ENCODE measurements at regions of chr15 and their contacts with region 1.

Region 1: GRCh38 chr15:30991255-30992072 is at the start of gene MTMR10:
- DNase-seq: peak; percentile 48
- ATAC-seq: peak; percentile 90
- H3K4me3 ChIP-seq: peak within 1 kb of the TSS; percentile 93 to 98 (median 97)
- H3K27ac ChIP-seq: peak within 1 kb of the TSS; percentile 89
- H3K4me1 ChIP-seq: peaks cover 41% of the 10 kb centered on the region
- H3K27me3 ChIP-seq: no peaks in the 10 kb centered on the region; a peak in 1 of 5 replicates
- CTCF ChIP-seq: no peak
- EP300 ChIP-seq: 0 out of 4 replicates have a peak, but pooled peaks of 1 of the 2 experiments have one; percentile 6
- POLR2A ChIP-seq: peak; percentile 86 to 87
- RAD21 ChIP-seq: peak; percentile 28; the same call in 1 of the 2 replicates
- total RNA-seq, gene MTMR10: 17.4 and 18.6 TPM in 2 replicates

Region 2: DNA sequence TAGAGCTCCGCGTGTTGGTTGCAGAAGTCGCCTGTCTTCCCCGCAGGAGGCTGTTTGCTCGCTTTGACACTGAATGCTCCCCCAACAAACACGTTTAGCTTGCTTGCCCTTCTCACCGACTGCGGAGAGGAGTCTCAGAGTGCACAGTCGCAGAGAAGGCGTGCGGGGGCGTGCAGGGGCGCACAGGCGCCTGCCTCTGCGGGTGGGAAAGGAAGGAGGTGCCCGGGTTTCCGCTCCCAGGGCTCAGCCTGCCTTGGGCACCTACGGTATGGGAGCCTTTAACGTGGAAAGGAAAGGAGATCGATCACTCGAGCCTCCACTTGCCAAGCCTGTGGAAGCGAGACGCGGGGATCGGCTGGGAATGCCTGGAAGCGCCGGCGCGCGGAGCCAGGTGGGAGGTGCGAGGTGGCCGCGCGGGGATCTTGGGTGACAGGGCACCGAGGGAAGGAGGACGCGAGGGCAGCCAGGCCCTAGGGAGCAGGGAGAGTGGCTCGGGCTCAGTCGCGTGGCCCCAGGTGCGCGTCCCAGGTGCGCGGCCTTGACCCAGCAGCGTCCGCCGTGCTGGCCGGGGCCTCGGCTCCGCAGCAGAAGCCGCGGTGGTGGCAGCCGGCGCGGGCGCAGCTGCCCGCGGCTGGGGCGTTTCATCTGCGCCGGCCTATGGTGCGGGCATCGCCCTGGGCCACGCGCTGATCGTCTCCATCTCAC is 87.8 kb before region 1 on chr15 and contains the start of gene FAN1:
- CTCF ChIA-PET with region 1: no interaction called
- POLR2A ChIA-PET with region 1: interaction called, 8 read pairs
- in situ Hi-C with region 1: no loop called
- intact Hi-C with region 1: loop called (anchors 10 kb)
- DNase-seq: peak; percentile 78
- ATAC-seq: peak; percentile 96
- H3K4me3 ChIP-seq: peak within 1 kb of the TSS; percentile 77 to 88 (median 77)
- H3K27ac ChIP-seq: peak within 1 kb of the TSS; percentile 74
- H3K4me1 ChIP-seq: peaks cover 41% of the 10 kb centered on the region
- H3K27me3 ChIP-seq: no peaks in the 10 kb centered on the region
- CTCF ChIP-seq: peak; percentile 47
- EP300 ChIP-seq: no peak
- POLR2A ChIP-seq: peak; percentile 73 to 91; a peak in 3 of 4 replicates
- RAD21 ChIP-seq: 0 out of 2 replicates have a peak, but pooled peaks have one; percentile 35
- total RNA-seq, gene FAN1: 20.1 TPM in 2 replicates

Region 3: DNA sequence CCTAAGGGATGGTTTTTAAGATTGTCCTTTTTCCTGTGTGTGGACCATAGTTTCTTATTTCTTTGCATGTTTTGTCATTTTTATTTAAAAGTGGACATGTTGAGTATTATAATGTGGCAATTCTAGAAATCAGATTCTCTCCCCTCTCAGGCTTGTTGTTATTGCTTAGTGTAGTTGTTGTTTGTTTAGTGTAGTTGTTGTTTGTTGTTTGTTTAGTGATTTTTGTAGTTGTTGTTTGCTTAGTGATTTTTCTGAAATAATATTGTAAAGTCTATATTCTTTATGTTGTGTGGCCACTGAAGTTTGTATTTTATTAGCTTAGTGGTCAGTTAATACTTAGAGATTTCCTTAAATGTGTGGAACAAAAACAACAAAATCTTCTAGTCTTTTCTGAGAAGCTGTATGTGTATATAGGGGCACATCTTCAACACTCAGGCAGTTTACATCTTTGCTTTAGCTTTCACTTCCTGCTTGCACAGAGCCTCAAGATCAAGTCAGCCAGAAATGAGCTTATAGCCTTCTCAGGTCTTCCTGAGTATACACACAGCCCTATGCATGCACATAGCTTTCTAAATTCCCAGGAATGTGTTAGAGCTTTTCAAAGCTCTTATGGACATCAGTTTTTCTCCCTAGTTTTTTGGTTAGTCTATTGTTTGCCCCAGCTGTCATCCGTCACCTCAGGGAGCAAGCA is 22.2 kb after region 1 on chr15:
- CTCF ChIA-PET with region 1: no interaction called
- POLR2A ChIA-PET with region 1: interaction called, 21 read pairs
- in situ Hi-C with region 1: no loop called
- intact Hi-C with region 1: no loop called
- DNase-seq: no peak
- ATAC-seq: peak; percentile 77
- H3K4me3 ChIP-seq: no peak overlapping the region; a peak in 1 of 6 replicates
- H3K27ac ChIP-seq: no peak overlapping the region
- H3K4me1 ChIP-seq: peaks cover 17% of the 10 kb centered on the region
- H3K27me3 ChIP-seq: no peaks in the 10 kb centered on the region
- CTCF ChIP-seq: no peak
- EP300 ChIP-seq: no peak
- POLR2A ChIP-seq: no peak
- RAD21 ChIP-seq: no peak

Region 4: DNA sequence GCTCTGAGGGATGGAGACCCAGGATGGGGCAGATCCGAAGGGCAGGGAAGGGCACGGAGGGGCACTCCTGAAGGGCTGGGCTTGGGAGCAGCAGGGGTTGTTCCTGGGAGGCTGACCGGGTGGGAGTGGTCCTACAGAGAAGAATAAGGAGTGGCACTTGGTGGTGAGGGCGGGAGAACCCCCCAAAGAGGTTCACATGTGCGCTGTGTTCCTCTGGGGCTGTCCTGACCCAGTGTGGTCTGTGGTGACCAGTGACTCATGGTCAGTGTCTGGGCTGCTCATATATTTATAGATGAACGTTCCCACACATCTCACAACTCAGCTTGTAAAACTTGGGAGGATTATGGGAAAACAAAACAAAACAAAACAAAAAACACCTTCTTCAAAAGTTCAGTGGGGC is 100.0 kb after region 1 on chr15:
- CTCF ChIA-PET with region 1: no interaction called
- POLR2A ChIA-PET with region 1: interaction called, 8 read pairs
- in situ Hi-C with region 1: no loop called
- intact Hi-C with region 1: loop called (anchors 5 kb)
- DNase-seq: no peak
- ATAC-seq: no peak
- H3K4me3 ChIP-seq: no peak overlapping the region
- H3K27ac ChIP-seq: no peak overlapping the region
- H3K4me1 ChIP-seq: peaks cover 62% of the 10 kb centered on the region
- H3K27me3 ChIP-seq: peaks cover 0 to 2% of the 10 kb centered on the region in 2 experiments; a peak in 1 of 5 replicates
- CTCF ChIP-seq: no peak
- EP300 ChIP-seq: no peak
- POLR2A ChIP-seq: no peak
- RAD21 ChIP-seq: no peak

Region 5: DNA sequence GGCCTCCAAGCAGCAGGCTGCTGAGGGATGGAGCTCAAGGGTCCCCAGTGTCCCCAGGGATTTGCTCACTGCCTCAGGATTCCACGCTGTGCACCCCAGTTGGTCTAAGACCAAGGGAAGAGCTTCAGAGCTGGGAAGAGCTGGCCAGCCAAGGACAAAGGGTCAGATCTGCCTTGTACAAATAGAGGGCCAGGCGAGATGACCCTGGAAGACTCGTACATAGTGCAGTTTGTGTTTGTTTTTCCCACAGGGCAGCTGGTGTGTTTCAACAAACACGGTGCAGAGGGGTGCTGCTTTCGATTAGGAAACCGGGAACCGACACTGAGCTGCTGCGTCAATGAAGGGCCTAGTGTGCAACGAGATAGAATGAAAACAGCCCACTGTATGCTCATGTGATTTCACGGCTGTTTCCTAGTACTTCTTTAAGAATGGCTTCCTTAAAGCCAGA is 166.2 kb after region 1 on chr15:
- CTCF ChIA-PET with region 1: no interaction called
- POLR2A ChIA-PET with region 1: interaction called, 10 read pairs
- in situ Hi-C with region 1: no loop called
- intact Hi-C with region 1: no loop called
- DNase-seq: peak; percentile 98
- ATAC-seq: peak; percentile 99
- H3K4me3 ChIP-seq: peak overlapping the region in 2 of 3 experiments; percentile 12 to 35; a peak in 2 of 6 replicates
- H3K27ac ChIP-seq: peak overlapping the region; percentile 99
- H3K4me1 ChIP-seq: peaks cover 66% of the 10 kb centered on the region
- H3K27me3 ChIP-seq: no peaks in the 10 kb centered on the region
- CTCF ChIP-seq: peak; percentile 16; the same call in 1 of the 2 replicates
- EP300 ChIP-seq: peak; percentile 97 to 98
- POLR2A ChIP-seq: peak in 1 of 2 experiments; percentile 50; a peak in 1 of 4 replicates
- RAD21 ChIP-seq: peak; percentile 12; the same call in 1 of the 2 replicates

Region 6: DNA sequence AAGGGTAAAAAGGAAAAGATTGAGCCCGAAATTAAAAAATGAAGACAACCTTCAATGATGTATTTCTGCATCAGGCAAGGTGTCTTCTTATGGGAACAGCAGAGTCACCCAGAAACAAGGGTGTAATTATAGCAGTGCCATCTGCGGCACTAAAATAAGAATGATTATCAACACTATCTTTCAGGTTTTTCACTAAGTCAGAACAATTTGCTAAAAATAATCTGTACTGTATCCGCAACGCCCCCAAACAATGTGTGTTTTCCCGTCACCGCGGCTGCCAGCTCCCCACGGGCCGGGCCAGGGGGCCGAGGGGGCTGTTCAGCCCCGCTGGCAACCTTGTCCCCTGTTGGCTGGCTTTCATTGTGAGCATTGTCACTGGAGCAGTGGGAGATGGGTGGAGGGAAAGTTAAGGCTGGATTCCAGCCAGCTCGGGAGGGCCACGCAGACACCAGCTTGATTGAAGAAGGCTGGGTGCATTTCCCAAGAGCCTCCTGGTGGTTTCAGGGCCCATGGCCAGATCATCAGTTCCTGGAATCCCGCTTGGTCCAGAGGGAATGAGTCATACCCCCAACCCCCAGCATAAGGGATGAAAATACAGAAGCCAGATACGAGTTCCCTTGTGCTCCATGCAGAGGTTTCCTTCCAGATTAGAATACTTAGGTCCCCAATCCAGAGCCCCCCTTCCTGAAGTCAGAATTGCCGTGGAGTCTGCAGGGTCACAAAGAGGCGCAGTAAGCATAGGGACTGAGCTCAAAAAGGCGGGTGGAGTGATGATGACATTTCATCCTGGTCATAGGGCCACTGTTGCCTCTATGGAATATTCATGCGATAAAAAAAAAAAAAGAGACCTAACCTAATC is 244.9 kb after region 1 on chr15:
- CTCF ChIA-PET with region 1: no interaction called
- POLR2A ChIA-PET with region 1: no interaction called
- in situ Hi-C with region 1: no loop called
- intact Hi-C with region 1: no loop called
- DNase-seq: peak; percentile 64
- ATAC-seq: peak; percentile 92
- H3K4me3 ChIP-seq: peak overlapping the region; percentile 33 to 66 (median 55)
- H3K27ac ChIP-seq: no peak overlapping the region
- H3K4me1 ChIP-seq: peaks cover 21% of the 10 kb centered on the region
- H3K27me3 ChIP-seq: peaks cover 0 to 2% of the 10 kb centered on the region in 2 experiments; a peak in 1 of 5 replicates
- CTCF ChIP-seq: peak; percentile 11; the same call in 1 of the 2 replicates
- EP300 ChIP-seq: no peak
- POLR2A ChIP-seq: no peak
- RAD21 ChIP-seq: no peak

Measured in HepG2 (cell line).